Caco-2 (cell line): ENCODE measurements at regions of chr9 and their contacts with region 1.

Region 1: GRCh38 chr9:18208154-18209059 is 265.5 kb upstream of the ADAMTSL1 start:
- DNase-seq: peak; percentile 62 to 70
- H3K4me3 ChIP-seq: no peak overlapping the region
- H3K4me3 Mint-ChIP-seq: no peak overlapping the region
- H3K27ac Mint-ChIP-seq: no peak overlapping the region
- H3K4me1 ChIP-seq: peaks cover 6% of the 10 kb centered on the region
- H3K4me1 Mint-ChIP-seq: no peaks in the 10 kb centered on the region
- H3K27me3 ChIP-seq: no peaks in the 10 kb centered on the region
- H3K27me3 Mint-ChIP-seq: no peaks in the 10 kb centered on the region
- CTCF ChIP-seq: peak; percentile 46 to 67

Region 2: GRCh38 chr9:17810728-17811571 is 397.5 kb before region 1 on chr9:
- CTCF ChIA-PET with region 1: interaction called, 12 read pairs
- POLR2A ChIA-PET with region 1: no interaction called
- intact Hi-C with region 1: loop called (anchors 1 kb)
- DNase-seq: peak in 1 of 2 experiments; percentile 36
- H3K4me3 ChIP-seq: no peak overlapping the region
- H3K4me3 Mint-ChIP-seq: no peak overlapping the region
- H3K27ac Mint-ChIP-seq: no peak overlapping the region
- H3K4me1 ChIP-seq: no peaks in the 10 kb centered on the region
- H3K4me1 Mint-ChIP-seq: no peaks in the 10 kb centered on the region
- H3K27me3 ChIP-seq: no peaks in the 10 kb centered on the region
- H3K27me3 Mint-ChIP-seq: peaks cover 13% of the 10 kb centered on the region
- CTCF ChIP-seq: peak; percentile 58 to 66

Region 3: DNA sequence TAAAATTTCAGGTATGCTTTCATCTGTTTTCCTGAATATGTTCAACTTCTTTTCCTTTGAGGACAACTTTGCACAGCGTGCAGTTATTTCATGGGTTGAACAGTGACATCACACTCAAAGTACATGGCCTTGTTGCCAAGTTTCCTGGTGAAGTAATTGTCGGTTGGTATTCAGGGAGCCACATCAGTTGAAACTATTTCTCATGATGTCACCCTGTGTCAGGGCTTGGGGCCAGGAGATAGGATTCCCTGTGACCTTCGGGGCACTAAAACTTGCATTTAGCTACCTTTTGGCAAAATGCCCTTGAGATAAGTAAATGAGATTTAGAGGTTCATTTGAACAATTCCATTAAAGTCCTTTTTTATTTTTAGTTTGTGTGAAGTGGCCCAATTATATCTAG is 245.7 kb before region 1 on chr9:
- CTCF ChIA-PET with region 1: no interaction called
- POLR2A ChIA-PET with region 1: no interaction called
- intact Hi-C with region 1: no loop called
- DNase-seq: no peak
- H3K4me3 ChIP-seq: no peak overlapping the region
- H3K4me3 Mint-ChIP-seq: no peak overlapping the region
- H3K27ac Mint-ChIP-seq: no peak overlapping the region
- H3K4me1 ChIP-seq: no peaks in the 10 kb centered on the region
- H3K4me1 Mint-ChIP-seq: no peaks in the 10 kb centered on the region
- H3K27me3 ChIP-seq: no peaks in the 10 kb centered on the region
- H3K27me3 Mint-ChIP-seq: peaks cover 5% of the 10 kb centered on the region
- CTCF ChIP-seq: no peak

Region 4: DNA sequence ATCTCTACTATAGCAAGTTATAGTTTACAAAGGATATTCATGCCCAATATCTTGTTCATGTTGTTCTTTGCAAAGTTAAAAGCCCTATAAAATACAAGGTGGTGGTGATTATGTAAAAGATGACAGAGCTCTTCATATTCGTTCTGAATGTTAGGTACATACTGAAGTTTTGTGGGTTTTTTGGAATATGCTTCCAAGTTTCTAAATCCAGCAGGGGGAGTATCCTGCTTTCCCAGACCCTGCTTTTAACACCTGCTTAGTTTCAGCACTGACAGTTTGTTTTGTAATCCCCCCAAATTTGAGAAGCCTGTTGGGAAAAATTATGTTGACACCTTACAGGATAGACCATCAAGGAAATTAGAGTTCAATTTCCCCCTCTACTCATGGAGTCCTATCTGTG is 191.3 kb before region 1 on chr9:
- CTCF ChIA-PET with region 1: interaction called, 5 read pairs
- POLR2A ChIA-PET with region 1: no interaction called
- intact Hi-C with region 1: loop called (anchors 5 kb)
- DNase-seq: no peak
- H3K4me3 ChIP-seq: no peak overlapping the region
- H3K4me3 Mint-ChIP-seq: no peak overlapping the region
- H3K27ac Mint-ChIP-seq: no peak overlapping the region
- H3K4me1 ChIP-seq: 0 out of 2 replicates have a peak, but pooled peaks cover 7% of the 10 kb centered on the region
- H3K4me1 Mint-ChIP-seq: no peaks in the 10 kb centered on the region
- H3K27me3 ChIP-seq: no peaks in the 10 kb centered on the region
- H3K27me3 Mint-ChIP-seq: no peaks in the 10 kb centered on the region
- CTCF ChIP-seq: peak; percentile 9 to 28

Region 5: GRCh38 chr9:18149471-18150011 is 58.9 kb before region 1 on chr9:
- CTCF ChIA-PET with region 1: no interaction called
- POLR2A ChIA-PET with region 1: no interaction called
- intact Hi-C with region 1: loop called (anchors 1 kb)
- DNase-seq: no peak
- H3K4me3 ChIP-seq: no peak overlapping the region
- H3K4me3 Mint-ChIP-seq: no peak overlapping the region
- H3K27ac Mint-ChIP-seq: no peak overlapping the region
- H3K4me1 ChIP-seq: peaks cover 4% of the 10 kb centered on the region; the same call in 1 of the 2 replicates
- H3K4me1 Mint-ChIP-seq: no peaks in the 10 kb centered on the region
- H3K27me3 ChIP-seq: no peaks in the 10 kb centered on the region
- H3K27me3 Mint-ChIP-seq: no peaks in the 10 kb centered on the region
- CTCF ChIP-seq: peak in 1 of 2 experiments; percentile 2

Region 6: DNA sequence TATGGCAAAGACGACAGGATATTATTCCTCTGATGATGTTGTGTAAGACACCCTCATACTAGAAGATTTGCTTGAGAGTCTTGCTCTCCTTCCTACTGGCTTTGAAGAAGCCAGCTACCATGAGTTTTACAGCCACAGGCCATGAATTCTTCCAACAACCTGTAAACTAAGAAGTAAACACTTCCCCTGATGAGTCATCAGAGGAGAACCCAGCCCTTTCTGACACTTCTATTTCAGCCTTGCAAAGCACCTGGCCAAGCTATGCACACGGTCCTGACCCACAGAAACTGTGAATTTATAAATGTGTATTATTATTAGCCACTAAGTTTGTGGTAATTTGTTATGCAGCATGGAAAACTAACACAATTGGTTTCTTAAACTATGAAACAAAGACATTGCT is 23.2 kb before region 1 on chr9:
- CTCF ChIA-PET with region 1: interaction called, 3 read pairs
- POLR2A ChIA-PET with region 1: no interaction called
- intact Hi-C with region 1: loop called (anchors 2 kb)
- DNase-seq: peak in 1 of 2 experiments; percentile 33
- H3K4me3 ChIP-seq: no peak overlapping the region
- H3K4me3 Mint-ChIP-seq: no peak overlapping the region
- H3K27ac Mint-ChIP-seq: no peak overlapping the region
- H3K4me1 ChIP-seq: peaks cover 32% of the 10 kb centered on the region
- H3K4me1 Mint-ChIP-seq: no peaks in the 10 kb centered on the region
- H3K27me3 ChIP-seq: no peaks in the 10 kb centered on the region
- H3K27me3 Mint-ChIP-seq: no peaks in the 10 kb centered on the region
- CTCF ChIP-seq: no peak

Region 7: DNA sequence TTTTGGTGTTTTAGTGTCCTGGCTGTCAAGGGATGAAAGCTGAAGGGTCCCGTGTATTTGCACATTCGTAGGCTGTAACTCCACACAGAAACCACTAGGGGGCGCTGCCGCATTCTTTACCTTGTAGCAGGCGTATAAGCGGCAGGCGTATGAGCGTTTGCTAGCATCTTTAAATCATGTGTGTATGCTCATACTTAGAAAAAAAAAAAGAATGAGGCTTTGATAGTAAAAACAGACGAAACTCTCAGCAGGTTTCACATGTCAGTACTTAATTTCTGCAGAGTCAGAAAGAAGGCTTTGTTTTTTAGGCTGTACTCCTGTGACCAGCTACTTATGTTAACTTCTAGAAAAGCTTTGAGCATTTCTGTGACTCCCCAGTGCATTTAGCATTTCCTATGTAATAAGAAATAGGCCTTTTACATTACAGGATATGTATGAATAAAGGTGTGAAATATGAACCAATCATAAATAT is 46.8 kb after region 1 on chr9:
- CTCF ChIA-PET with region 1: no interaction called
- POLR2A ChIA-PET with region 1: no interaction called
- intact Hi-C with region 1: no loop called
- DNase-seq: peak; percentile 50 to 71
- H3K4me3 ChIP-seq: no peak overlapping the region
- H3K4me3 Mint-ChIP-seq: no peak overlapping the region
- H3K27ac Mint-ChIP-seq: no peak overlapping the region
- H3K4me1 ChIP-seq: no peaks in the 10 kb centered on the region
- H3K4me1 Mint-ChIP-seq: no peaks in the 10 kb centered on the region
- H3K27me3 ChIP-seq: no peaks in the 10 kb centered on the region
- H3K27me3 Mint-ChIP-seq: peaks cover 12% of the 10 kb centered on the region
- CTCF ChIP-seq: peak; percentile 72